T-cell (primary cell): ENCODE measurements at regions of chr1 and their contacts with region 1.

Region 1: DNA sequence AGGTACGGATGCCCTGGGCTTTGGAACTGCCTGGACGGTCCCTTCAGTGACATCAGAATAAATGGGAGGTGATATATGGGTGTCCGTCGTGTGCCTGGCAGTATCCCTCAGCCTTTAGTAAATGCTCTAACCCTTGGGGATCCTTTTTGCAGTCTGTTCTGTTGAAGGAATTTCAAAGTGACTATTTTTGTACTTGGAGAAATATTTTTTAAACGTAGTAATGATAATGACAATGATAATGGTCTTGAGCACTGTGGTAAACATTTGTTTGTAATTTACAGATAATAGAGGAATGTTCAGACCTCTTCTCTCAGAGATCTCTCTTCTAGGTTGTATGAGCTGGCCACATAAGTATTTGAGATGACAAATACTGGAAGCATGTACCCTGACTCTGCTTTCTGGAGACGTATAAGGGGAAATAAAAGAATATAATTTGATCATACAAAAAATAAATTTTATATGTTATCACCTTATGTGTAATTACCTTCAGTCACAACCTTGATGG is 42.0 kb upstream of the SRRM1 start:
- DNase-seq: no peak
- ATAC-seq: no peak
- H3K4me3 ChIP-seq: no peak overlapping the region
- H3K4me3 Mint-ChIP-seq: no peak overlapping the region
- H3K27ac ChIP-seq: no peak overlapping the region
- H3K27ac Mint-ChIP-seq: no peak overlapping the region
- H3K4me1 ChIP-seq: no peaks in the 10 kb centered on the region
- H3K4me1 Mint-ChIP-seq: no peaks in the 10 kb centered on the region
- H3K27me3 ChIP-seq: peaks cover 0 to 13% of the 10 kb centered on the region in 2 experiments
- H3K27me3 Mint-ChIP-seq: peaks cover 5 to 10% of the 10 kb centered on the region in 2 donors

Region 2: GRCh38 chr1:24459551-24460266 is 141.4 kb before region 1 on chr1:
- CTCF ChIA-PET with region 1: no interaction called
- POLR2A ChIA-PET with region 1: no interaction called
- DNase-seq: no peak
- ATAC-seq: no peak
- H3K4me3 ChIP-seq: no peak overlapping the region
- H3K4me3 Mint-ChIP-seq: no peak overlapping the region
- H3K27ac ChIP-seq: no peak overlapping the region
- H3K27ac Mint-ChIP-seq: peak overlapping the region in 1 of 2 donors; percentile 28
- H3K4me1 ChIP-seq: peaks cover 5 to 7% of the 10 kb centered on the region in 2 experiments
- H3K4me1 Mint-ChIP-seq: peaks cover 20 to 29% (median 21%) of the 10 kb centered on the region in 3 donors
- H3K27me3 ChIP-seq: no peaks in the 10 kb centered on the region
- H3K27me3 Mint-ChIP-seq: no peaks in the 10 kb centered on the region

Region 3: GRCh38 chr1:24470592-24470991 is 130.5 kb before region 1 on chr1:
- CTCF ChIA-PET with region 1: no interaction called
- POLR2A ChIA-PET with region 1: interaction called in 1 of 2 experiments, 12 read pairs
- DNase-seq: no peak
- ATAC-seq: no peak
- H3K4me3 ChIP-seq: no peak overlapping the region
- H3K4me3 Mint-ChIP-seq: no peak overlapping the region
- H3K27ac ChIP-seq: no peak overlapping the region
- H3K27ac Mint-ChIP-seq: peak overlapping the region; percentile 74 to 76
- H3K4me1 ChIP-seq: peaks cover 0 to 5% of the 10 kb centered on the region in 2 experiments
- H3K4me1 Mint-ChIP-seq: peaks cover 13 to 30% (median 21%) of the 10 kb centered on the region in 3 donors
- H3K27me3 ChIP-seq: no peaks in the 10 kb centered on the region
- H3K27me3 Mint-ChIP-seq: no peaks in the 10 kb centered on the region

Region 4: DNA sequence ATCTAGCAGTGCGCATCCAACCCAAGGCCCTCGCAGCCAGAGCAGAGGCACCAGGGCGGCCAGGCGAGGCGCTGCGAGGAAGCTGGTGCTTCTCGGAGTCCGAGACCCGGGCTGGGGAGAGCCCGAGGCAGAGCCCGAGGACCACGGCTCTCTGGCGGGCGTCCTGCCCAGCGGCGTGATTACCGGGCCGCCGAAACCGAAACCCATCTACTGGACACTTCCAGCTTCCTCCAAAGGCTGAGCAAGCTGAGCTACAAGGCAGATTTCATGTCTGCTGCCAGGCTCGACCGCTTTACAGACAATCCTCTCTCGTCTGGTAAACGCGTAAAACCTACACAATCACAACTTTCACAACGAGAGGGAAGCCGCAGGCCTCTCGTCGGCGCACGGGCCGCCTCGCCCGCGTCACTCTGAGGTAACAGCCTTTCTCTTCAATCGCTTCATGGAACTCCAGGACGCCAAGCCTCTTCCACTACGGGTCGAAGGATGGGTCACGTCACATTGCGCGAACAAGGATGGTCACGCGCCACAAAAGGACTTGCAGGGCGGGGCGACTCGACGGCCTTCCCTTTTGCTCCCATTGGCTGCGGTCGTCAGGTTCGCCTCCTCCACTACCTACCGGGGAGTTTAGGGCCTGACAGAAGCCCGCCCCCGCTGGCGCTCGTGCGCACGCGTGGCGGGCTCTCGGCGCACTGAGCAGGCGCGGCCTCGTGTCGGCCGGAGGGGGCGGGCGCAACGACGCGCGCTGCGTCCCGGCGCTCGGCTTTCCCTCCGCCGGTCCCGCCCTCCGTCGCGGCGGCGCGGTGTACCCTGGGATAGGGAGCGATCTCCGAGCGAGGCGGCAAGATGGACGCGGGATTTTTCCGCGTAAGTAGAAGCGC is 41.6 kb after region 1 on chr1 and contains the start of gene SRRM1:
- CTCF ChIA-PET with region 1: no interaction called
- POLR2A ChIA-PET with region 1: interaction called in 1 of 2 experiments, 15 read pairs
- DNase-seq: peak; percentile 90 to 100 (median 99)
- ATAC-seq: peak; percentile 89 to 93 (median 92)
- H3K4me3 ChIP-seq: peak within 1 kb of the TSS; percentile 95 to 97
- H3K4me3 Mint-ChIP-seq: peak within 1 kb of the TSS; percentile 82 to 97 (median 93)
- H3K27ac ChIP-seq: peak within 1 kb of the TSS; percentile 96
- H3K27ac Mint-ChIP-seq: peak within 1 kb of the TSS; percentile 99
- H3K4me1 ChIP-seq: peaks cover 19 to 22% of the 10 kb centered on the region in 2 experiments
- H3K4me1 Mint-ChIP-seq: peaks cover 43 to 54% (median 54%) of the 10 kb centered on the region in 3 donors
- H3K27me3 ChIP-seq: no peaks in the 10 kb centered on the region
- H3K27me3 Mint-ChIP-seq: no peaks in the 10 kb centered on the region
- total RNA-seq, gene SRRM1: 158 to 303 (median 181) TPM